ENCODE measurements at regions of chr2 and their contacts with region 1.

Region 1: DNA sequence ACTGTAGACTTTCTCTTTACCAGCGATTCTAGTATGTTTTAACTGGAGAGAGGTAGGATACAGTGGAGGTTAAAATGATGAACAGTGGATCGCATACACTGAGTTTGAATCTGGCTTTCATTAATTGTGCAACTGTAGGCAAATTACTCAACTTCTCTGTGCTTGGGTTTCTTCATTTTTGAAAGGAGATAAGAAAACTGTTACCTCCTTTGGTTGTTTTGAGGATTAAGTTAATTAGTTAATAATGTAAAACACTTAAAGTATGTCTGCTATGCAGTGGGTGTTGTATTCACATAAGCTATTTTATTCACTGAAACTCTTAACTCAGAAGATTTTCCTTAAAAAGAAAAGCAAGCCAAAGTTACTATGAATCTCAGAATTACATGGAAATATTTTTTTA is 111.8 kb upstream of the CYP20A1 start:
- DNase-seq: no peak
- CTCF ChIP-seq: no peak

Region 2: DNA sequence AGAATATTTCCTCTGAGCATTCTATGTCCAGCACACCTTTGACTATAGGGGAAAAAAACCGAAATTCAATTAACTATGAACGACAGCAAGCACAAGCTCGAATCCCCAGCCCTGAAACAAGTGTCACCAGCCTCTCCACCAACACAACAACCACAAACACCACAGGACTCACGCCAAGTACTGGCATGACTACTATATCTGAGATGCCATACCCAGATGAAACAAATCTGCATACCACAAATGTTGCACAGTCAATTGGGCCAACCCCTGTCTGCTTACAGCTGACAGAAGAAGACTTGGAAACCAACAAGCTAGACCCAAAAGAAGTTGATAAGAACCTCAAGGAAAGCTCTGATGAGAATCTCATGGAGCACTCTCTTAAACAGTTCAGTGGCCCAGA is 571.6 kb before region 1 on chr2:
- in situ Hi-C with region 1: loop called (anchors 25 kb)
- DNase-seq: no peak
- CTCF ChIP-seq: no peak

Measured in GM13976 (cell line).